BJ (cell line): ENCODE measurements at regions of chr6 and their contacts with region 1.

Region 1: DNA sequence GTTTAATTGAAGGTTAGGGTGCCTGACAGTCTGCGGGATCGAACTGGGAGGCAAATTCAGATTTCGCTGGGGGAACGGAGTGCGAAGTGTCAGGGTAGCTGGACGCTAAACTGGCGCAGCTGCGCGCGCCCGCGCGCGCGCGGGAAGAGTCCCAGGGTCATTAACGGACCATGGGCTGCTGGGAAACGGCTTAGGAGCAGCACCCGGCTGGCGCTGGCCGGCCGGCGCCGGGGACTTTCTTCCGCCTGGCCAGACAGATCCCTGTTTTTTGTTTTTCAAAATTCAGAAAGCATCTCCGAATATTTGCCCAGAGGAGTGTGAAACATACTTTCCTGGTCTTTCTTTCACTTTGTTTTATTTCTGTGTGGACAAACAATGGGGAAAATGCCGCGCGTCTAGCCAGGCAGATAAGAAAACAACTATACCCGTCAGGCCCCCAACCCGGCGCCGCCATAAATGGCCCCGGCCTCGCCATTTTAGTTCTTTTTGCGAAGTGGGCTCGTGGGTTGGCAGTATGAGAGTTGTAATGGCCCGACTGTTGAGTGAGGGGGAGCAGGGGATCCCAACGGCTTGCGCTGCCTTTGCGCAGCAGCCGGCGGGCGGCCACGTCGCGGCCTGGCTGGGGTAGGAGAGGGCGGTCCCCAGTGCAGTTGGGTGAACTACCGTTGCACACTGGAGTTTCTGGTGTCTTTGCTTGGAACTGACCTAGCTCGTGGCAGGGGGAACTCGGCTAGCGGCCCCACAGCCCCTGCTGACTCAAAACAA is 7.1 kb downstream of the HSPA1B start:
- DNase-seq: no peak
- H3K4me3 ChIP-seq: peak overlapping the region; percentile 98
- H3K27me3 ChIP-seq: no peaks in the 10 kb centered on the region
- CTCF ChIP-seq: no peak

Region 2: DNA sequence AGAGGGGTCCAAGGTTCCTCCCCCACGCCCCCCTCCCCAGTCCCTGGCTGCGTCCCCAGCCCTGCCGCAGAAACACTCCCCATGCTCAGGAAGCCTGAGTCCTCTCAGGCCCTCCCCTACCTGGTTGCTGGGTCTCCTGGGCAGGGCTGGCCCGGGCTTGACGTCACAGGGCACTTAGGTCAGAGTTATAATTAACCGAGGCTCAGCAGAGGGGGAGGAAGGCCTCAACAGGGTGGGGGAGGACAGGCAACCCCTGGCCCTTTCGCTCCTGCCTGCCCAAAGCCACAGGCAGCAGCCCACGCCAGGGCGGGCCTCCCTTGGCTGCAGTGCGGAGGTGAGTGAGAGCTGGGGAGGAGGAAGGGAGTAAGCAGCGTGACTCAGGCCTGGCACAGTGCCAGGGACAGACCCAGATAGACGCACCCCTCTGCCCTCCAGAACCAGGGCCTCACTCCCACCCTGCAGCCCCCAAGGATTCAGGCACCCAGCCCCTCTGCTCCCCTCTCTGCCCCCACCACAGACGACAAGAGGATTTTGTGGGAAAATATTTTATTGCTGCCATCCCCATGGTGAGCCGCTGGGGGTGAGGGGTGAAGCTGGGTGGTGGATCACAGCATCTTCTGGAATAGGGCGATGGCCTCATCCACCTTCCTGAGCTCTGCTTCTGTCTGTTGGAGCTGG is 57.5 kb before region 1 on chr6 and contains the start of gene VWA7:
- CTCF ChIA-PET with region 1: interaction called, 17 read pairs
- POLR2A ChIA-PET with region 1: no interaction called
- DNase-seq: no peak
- H3K4me3 ChIP-seq: no peak within 1 kb of the TSS
- H3K27me3 ChIP-seq: no peaks in the 10 kb centered on the region
- CTCF ChIP-seq: no peak
- polyA plus RNA-seq, gene VWA7: 0.16 and 0.29 TPM in 2 replicates